Heart left ventricle (tissue), 16 donors: ENCODE measurements at regions of chr10 and their contacts with region 1.

Region 1: DNA sequence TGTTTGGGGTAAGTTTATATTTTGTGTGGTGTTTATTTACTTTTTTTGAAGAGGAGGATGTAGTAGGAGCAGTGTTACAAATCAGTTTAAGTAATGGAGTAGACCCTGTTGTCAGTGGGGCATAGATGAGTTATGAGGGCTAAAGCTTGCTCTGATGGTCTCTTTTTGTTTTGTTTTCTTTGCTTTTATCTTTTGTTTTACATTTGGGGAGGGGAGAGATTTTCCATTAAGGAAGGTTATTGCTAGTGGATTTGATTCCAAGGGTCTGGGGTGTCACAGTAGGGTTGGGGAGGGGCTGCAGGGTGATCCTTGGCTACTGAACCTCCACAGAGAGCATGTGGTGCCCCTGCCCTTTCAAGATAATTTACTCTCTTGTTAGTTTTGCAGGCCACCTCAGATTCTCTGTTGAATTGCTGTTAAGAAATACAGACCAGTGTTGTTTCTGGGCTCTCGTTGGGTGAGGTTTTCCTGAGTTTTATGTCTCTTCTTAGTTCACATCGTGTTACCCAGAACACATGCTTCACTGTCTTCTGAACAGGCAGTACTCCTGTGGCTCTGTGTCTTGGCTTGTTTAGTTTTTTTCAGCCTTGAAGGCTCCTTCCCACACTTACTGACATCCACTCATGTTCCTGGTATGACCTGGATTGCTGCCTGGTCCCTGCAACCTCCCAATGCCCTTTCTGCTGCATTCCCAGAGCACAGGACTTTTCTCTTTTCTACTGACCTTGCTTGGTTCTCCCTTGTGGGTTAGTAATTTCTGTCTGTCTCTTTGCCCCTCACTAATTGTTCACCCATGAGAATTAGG is 4.2 kb downstream of the KIFBP start:
- DNase-seq: peak in 4 of 5 donors; percentile 36 to 66 (median 52)
- ATAC-seq: peak in 3 of 4 donors; percentile 7 to 37 (median 32)
- H3K4me3 ChIP-seq: peak overlapping the region in 1 of 12 donors; percentile 2
- H3K27ac ChIP-seq: peak overlapping the region; percentile 31 to 80 (median 65)
- H3K4me1 ChIP-seq: peaks cover 4 to 69% (median 56%) of the 10 kb centered on the region in 12 donors
- H3K27me3 ChIP-seq: no peaks in the 10 kb centered on the region
- CTCF ChIP-seq: no peak
- POLR2A ChIP-seq: no peak

Region 2: DNA sequence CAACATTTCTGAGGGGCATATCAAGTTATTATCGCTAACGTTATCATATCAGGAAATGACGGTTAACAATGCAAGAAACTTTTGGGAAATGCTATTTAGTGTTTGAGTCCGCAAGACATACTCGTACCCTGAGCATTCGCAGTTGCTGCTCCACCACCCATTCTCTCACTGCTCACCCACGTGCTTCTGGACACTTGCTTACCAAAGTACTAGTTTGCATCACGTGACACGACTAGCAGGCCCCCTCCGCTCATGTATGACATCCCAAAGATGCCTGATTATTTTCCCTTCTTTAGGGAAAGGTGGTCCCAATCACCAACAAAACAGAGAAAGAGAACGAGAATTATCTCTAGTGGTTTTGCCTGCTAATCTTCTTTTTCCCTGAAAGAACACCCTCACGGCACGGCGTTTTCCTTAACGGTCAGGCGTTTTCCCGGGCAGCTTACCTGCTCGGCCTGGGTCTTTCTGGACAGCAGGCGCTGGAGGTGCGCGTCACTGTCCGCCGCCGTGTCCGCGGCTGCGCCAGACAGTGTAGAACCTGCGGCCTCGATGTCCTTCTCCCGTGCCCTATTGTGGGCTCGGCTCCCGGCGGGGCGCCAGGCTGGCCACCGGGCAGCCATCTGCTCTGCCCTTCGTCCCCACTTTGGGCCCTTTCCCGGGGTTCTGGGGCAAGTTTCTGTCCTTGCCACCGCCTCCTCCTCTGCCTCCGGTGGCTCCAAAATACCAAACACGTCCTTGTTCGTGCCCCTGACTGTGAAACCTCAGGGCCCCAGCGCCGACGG is 187.1 kb after region 1 on chr10 and contains the start of gene SUPV3L1:
- intact Hi-C with region 1: loop called in 1 of 10 experiments (anchors 10 kb)
- DNase-seq: peak; percentile 91 to 97 (median 91)
- ATAC-seq: peak; percentile 96 to 98 (median 97)
- H3K4me3 ChIP-seq: peak within 1 kb of the TSS; percentile 82 to 99 (median 94)
- H3K27ac ChIP-seq: peak within 1 kb of the TSS; percentile 84 to 98 (median 94)
- H3K4me1 ChIP-seq: peaks cover 0 to 38% (median 26%) of the 10 kb centered on the region in 12 donors
- H3K27me3 ChIP-seq: no peaks in the 10 kb centered on the region
- CTCF ChIP-seq: no peak
- POLR2A ChIP-seq: peak; percentile 43 to 62
- total RNA-seq, gene SUPV3L1: 26.6 to 53.4 (median 34.9) TPM

Region 3: GRCh38 chr10:69392481-69393000 is 399.7 kb after region 1 on chr10:
- intact Hi-C with region 1: loop called in 1 of 10 experiments (anchors 10 kb)
- DNase-seq: peak; percentile 83 to 90 (median 85)
- ATAC-seq: peak; percentile 84 to 92 (median 90)
- H3K4me3 ChIP-seq: no peak overlapping the region
- H3K27ac ChIP-seq: peak overlapping the region in 1 of 12 donors; percentile 9
- H3K4me1 ChIP-seq: peaks cover 0 to 41% (median 20%) of the 10 kb centered on the region in 12 donors
- H3K27me3 ChIP-seq: no peaks in the 10 kb centered on the region
- CTCF ChIP-seq: peak; percentile 89 to 98 (median 96)
- POLR2A ChIP-seq: no peak